Activated T-helper 2 cell treated with anti-CD3 and anti-CD28 coated beads, Interferon-gamma antibody, Interleukin-2, Interleukin-4, amounts not matched to agents 10 μg/mL and 5 μg/mL and 100 μg/mL, durations not matched to agents 14 hours and 24 hours and 36 hours (primary cell): ENCODE measurements at regions of chr19 and their contacts with region 1.

Region 1: DNA sequence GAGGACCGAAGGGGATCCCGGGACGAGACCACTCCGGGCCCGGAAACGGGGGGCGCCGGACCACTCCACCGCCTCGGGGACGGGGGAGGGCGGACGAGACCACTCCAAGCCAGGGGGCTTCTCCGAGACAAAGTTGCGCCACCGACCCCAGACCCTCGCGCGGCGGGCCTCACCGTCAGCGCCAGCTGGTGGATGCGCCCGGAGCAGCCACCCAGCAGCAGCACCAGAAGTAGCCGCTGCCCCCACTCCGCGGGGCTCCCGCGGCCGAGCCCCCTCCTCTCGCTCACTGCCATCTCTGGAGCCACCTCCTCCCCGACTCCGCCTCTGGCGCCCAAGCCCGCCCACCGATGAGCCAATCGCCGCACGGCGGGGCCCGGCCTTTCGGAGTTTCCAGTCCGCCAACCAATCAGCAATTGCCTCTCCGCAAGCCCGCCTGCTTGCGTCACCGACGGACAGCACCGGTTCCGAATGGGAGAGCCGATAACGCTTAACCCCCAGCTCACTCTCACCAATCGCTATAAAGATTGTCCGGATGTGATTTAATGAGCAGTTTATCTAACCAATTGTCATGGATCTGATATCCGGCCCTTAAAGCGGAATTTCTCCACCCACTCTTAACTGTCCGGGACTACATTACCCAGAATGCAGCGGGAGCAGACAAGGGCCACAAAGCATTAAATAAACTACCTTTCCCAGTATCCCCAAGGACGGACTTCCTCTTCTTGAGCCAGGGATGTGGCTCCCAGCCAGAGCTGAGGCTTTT is at the start of gene GPR108:
- DNase-seq: peak; percentile 100
- H3K4me3 Mint-ChIP-seq: peak within 1 kb of the TSS; percentile 98
- H3K27ac Mint-ChIP-seq: peak within 1 kb of the TSS; percentile 98
- H3K4me1 Mint-ChIP-seq: peaks cover 37% of the 10 kb centered on the region
- H3K27me3 Mint-ChIP-seq: no peaks in the 10 kb centered on the region
- total RNA-seq, gene GPR108: 90.4 and 95.4 TPM in 2 replicates

Region 2: DNA sequence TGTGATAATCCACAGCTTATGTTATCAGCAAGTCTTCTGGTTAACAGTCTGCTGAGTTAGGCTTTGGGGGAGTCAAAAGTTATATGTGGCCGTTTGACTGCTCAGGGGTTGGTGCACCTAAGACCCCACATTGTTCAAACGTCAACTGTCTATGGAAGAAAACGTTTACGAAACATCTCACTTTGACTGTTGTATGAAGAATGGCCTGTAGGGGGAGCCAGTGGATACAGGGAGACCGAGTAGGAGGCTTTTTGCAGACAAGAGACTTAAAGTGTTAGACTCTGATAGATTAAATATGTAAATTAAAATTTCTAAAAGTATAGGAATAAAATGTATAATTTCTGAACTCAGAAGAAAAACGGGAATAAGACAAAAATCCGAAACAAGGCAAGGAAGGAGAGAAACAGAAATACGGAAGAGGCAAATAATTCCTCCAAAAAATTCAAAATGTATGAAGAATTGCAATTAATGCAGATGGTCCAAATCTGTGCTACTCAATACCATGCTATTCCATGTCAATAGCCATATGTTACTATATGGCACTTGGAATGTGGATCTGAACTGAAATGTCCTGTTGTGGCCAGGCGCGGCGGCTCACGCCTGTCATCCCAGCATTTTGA is 105.4 kb before region 1 on chr19:
- intact Hi-C with region 1: loop called (anchors 1 kb)
- DNase-seq: peak; percentile 71
- H3K4me3 Mint-ChIP-seq: no peak overlapping the region
- H3K27ac Mint-ChIP-seq: no peak overlapping the region
- H3K4me1 Mint-ChIP-seq: peaks cover 25% of the 10 kb centered on the region
- H3K27me3 Mint-ChIP-seq: peaks cover 2% of the 10 kb centered on the region

Region 3: DNA sequence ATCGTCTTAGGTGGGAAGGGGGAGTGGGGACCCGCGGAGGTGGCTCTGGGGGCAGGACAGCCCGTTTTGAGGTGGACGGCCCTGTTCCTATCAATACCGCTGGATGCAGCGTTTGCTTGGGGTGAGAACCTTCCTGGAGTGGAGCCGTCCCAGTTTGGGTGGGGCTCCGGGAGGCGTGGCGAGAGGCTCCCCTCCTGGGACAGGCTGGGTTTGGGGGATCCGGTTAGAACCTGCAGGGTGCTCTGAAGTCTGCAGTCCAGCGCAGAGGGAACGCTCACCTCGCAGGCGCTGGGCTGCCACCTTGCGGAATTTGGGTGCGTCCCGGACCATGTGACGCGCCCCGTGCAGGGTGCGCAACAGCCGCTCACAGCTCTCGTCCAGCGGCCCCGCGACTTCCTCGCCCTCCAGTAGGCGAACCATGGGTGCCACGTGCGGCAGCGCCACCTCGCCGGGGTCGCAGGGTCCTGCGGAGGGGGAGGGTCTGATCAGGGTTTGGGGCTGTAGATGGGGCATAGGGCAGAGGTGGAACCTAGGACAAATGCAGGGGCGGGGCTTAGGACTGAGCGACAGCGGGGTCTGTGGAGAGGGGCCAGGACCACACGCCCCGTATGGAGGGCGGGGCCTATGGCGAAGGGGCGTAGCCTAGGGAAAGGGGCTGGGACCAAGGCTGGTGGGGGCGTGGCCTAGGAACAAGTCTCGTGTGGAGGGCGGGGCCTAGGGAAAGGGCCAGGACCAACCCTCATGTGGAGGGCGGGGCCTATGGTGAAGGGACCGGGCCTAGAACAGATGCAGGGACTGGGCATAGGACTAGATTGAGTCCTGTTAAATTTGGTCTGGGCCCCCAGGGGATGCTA is 15.9 kb after region 1 on chr19:
- intact Hi-C with region 1: loop called (anchors 1 kb)
- DNase-seq: peak; percentile 79
- H3K4me3 Mint-ChIP-seq: peak overlapping the region; percentile 70
- H3K27ac Mint-ChIP-seq: peak overlapping the region; percentile 92
- H3K4me1 Mint-ChIP-seq: peaks cover 3% of the 10 kb centered on the region
- H3K27me3 Mint-ChIP-seq: no peaks in the 10 kb centered on the region

Region 4: GRCh38 chr19:6767357-6768235 is 30.1 kb after region 1 on chr19 and contains the start of gene SH2D3A:
- intact Hi-C with region 1: loop called (anchors 1 kb)
- DNase-seq: peak; percentile 92
- H3K4me3 Mint-ChIP-seq: peak within 1 kb of the TSS; percentile 89
- H3K27ac Mint-ChIP-seq: peak within 1 kb of the TSS; percentile 91
- H3K4me1 Mint-ChIP-seq: peaks cover 33% of the 10 kb centered on the region
- H3K27me3 Mint-ChIP-seq: no peaks in the 10 kb centered on the region
- total RNA-seq, gene SH2D3A: 7.7 and 8.7 TPM in 2 replicates

Region 5: DNA sequence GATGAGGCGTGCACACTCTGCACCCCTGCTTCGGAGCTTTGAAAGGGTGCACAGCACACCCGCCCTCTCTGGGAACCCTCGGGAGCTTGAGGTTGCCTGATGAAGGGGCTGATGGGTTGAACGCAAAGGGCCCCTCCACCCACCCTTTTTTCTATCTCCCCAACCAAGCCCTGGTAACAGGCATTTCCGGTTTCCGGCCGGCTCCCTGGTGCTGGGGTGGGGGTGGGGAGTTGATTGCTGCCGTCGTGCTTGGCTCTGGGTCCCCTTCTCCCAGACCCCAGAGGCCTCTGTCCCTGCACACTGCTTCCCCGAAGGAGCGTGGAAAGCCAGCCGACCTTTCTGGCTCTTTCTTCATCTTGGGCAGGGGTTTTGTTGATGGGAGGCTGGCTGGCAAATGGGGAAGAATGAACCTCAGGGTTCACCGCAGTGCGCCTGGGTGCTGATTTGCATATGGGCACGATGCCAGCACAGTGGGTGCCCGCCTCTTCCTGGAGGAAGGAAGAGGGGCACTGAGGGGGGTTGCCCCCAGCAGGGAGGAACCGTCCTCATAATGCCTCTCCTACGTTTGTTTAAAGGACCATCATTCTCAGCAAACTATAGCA is 64.1 kb after region 1 on chr19:
- intact Hi-C with region 1: loop called (anchors 2 kb)
- DNase-seq: peak; percentile 75
- H3K4me3 Mint-ChIP-seq: peak overlapping the region; percentile 85
- H3K27ac Mint-ChIP-seq: peak overlapping the region; percentile 97
- H3K4me1 Mint-ChIP-seq: peaks cover 46% of the 10 kb centered on the region
- H3K27me3 Mint-ChIP-seq: no peaks in the 10 kb centered on the region